GM23248 (cell line): ENCODE measurements at regions of chr10 and their contacts with region 1.

Region 1: GRCh38 chr10:69786791-69787190 is 14.9 kb upstream of the COL13A1 start:
- DNase-seq: peak; percentile 67
- H3K4me3 ChIP-seq: no peak overlapping the region
- H3K27ac ChIP-seq: no peak overlapping the region
- H3K4me1 ChIP-seq: no peaks in the 10 kb centered on the region
- H3K27me3 ChIP-seq: peaks cover 45% of the 10 kb centered on the region

Region 2: GRCh38 chr10:69253171-69253570 is 533.6 kb before region 1 on chr10:
- in situ Hi-C with region 1: no loop called
- DNase-seq: no peak
- H3K4me3 ChIP-seq: no peak overlapping the region
- H3K27ac ChIP-seq: no peak overlapping the region
- H3K4me1 ChIP-seq: no peaks in the 10 kb centered on the region
- H3K27me3 ChIP-seq: no peaks in the 10 kb centered on the region

Region 3: DNA sequence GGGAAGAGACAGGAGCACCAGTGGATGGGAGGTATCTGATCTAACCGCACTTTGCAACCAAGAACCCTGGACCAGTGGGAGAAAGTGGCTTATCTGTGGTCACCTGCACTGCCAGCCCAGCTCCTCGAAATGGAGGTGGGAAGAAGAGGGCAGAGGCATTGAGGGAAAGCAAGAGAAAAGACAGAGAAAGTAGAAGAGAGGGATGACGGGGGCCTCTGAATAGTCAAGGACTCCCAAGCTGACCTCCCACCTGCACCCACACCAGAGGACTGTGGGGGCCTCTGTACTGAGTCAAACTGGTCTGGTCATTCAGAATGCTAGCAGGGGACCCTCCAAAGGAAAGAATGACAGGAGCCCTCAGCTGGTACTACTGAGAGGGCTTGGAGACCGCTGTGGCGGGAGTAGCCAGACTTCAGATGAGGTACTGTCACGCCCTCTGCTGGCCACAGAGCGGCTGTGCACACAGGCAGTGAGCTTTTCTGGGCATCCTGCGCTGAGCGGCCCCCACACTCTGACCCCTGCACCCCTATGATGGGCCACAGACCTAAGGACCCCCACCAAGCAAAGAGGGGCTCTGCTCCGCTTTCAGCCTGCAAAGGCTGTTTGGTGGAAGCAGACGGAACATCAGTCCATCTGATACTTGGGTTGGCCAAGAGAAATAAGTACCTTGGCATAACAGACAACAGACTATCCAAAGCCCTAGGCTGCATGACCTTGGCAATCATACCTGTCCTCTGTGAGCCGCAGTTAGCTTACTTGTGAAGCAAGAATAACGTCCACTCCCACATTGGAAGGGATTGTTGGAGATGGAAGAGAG is 127.8 kb after region 1 on chr10:
- in situ Hi-C with region 1: loop called (anchors 10 kb)
- DNase-seq: peak; percentile 81
- H3K4me3 ChIP-seq: no peak overlapping the region
- H3K27ac ChIP-seq: no peak overlapping the region
- H3K4me1 ChIP-seq: no peaks in the 10 kb centered on the region
- H3K27me3 ChIP-seq: no peaks in the 10 kb centered on the region